AG04449 (cell line): ENCODE measurements at regions of chr6 and their contacts with region 1.

Region 1: DNA sequence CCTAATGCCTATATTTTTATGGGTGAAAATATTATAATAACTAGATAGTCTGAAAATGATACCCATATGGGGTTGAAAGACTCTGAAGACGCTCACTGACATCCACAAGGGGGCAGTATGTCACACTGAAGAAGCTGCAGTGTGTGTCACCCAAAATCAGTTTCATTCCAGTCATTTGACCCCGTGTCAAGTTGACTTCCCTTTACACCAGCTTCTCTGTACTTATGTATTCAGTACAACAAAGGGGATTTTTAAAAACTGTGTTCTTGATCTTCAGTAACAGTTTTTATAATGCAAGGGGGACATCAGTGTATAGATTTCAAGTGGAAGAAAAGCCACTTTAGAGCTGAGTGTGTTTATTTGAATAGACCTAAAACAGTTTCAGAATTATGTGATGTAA is 19.3 kb downstream of the FAXC start:
- DNase-seq: no peak
- H3K4me3 ChIP-seq: no peak overlapping the region
- CTCF ChIP-seq: peak; percentile 72

Region 2: DNA sequence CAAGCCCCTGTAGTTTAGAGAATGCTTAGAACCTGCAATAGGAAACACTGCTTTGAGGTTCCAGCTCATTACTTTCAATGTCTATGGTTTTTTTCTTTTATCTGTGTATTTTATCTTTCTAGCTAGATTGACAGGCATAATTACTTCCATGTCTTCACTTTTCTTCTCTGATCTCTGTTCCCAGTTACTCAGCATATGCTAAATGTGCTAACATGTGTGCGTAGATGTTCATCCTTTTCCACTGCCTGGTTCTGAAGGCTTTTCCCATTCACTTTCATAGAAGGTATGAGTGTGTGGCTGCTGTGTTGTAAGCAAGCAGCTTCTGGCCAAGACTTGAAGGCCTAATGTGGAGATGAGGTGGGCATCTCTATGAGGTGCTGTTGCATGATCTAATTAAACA is 19.6 kb before region 1 on chr6:
- CTCF ChIA-PET with region 1: interaction called, 23 read pairs
- POLR2A ChIA-PET with region 1: no interaction called
- DNase-seq: no peak
- H3K4me3 ChIP-seq: no peak overlapping the region
- CTCF ChIP-seq: no peak

Region 3: GRCh38 chr6:99344289-99344688 is 14.1 kb after region 1 on chr6:
- CTCF ChIA-PET with region 1: interaction called, 109 read pairs
- POLR2A ChIA-PET with region 1: no interaction called
- DNase-seq: no peak
- H3K4me3 ChIP-seq: no peak overlapping the region
- CTCF ChIP-seq: no peak

Region 4: GRCh38 chr6:99393698-99394531 is 63.8 kb after region 1 on chr6 and contains the start of gene COQ3:
- CTCF ChIA-PET with region 1: interaction called, 23 read pairs
- POLR2A ChIA-PET with region 1: no interaction called
- DNase-seq: no peak
- H3K4me3 ChIP-seq: peak within 1 kb of the TSS; percentile 87
- CTCF ChIP-seq: no peak

Region 5: DNA sequence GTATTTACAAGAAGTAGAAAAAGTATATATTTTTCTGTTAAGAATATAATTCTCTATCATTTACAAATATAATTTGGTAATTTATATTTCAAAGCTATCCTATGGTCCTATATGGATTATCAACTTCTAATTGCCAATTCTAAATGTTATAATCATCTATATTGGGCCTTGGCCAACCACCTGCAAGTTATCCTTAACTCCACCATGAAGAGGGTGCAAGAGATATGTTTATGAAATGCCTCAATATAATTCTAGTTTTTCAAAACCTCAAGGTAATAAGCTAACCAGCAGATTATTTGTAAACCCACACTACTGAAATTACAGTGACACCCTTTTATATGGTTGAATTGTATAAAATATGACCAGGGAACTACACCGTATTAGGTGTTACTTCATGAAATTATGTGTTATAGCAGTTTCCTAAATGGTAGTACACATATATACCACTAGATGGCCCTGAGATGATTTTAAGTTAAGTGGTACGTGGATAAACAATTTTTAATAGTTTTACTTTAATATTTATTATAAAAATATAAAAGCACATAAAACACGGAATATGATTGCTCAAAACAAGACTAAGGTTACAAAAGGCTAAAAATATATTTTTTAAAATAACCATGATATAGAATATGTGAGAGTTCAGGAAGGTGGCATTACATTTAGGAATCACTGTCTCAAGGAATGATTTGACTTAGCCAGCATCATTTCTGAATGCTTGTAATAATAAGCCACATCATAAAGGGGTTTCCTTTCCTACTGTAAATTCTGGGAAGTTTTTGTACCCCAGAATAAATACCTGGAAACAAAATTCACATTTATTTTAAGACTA is 104.8 kb after region 1 on chr6:
- CTCF ChIA-PET with region 1: interaction called, 11 read pairs
- POLR2A ChIA-PET with region 1: no interaction called
- DNase-seq: no peak
- H3K4me3 ChIP-seq: no peak overlapping the region
- CTCF ChIP-seq: peak; percentile 37

Region 6: GRCh38 chr6:99822741-99823512 is 492.8 kb after region 1 on chr6:
- CTCF ChIA-PET with region 1: interaction called, 15 read pairs
- POLR2A ChIA-PET with region 1: no interaction called
- DNase-seq: peak; percentile 19
- H3K4me3 ChIP-seq: no peak overlapping the region
- CTCF ChIP-seq: peak; percentile 31